ENCODE measurements at regions of chr14 and their contacts with region 1.

Region 1: GRCh38 chr14:68788996-68789820 is 3.7 kb downstream of the ZFP36L1 start:
- DNase-seq: peak; percentile 89
- ATAC-seq: peak; percentile 19
- H3K4me3 ChIP-seq: peak overlapping the region; percentile 90
- H3K27ac ChIP-seq: peak overlapping the region; percentile 97
- H3K4me1 ChIP-seq: peaks cover 56% of the 10 kb centered on the region
- H3K27me3 ChIP-seq: no peaks in the 10 kb centered on the region
- CTCF ChIP-seq: peak; percentile 86

Region 2: GRCh38 chr14:68084256-68084655 is 705.0 kb before region 1 on chr14:
- CTCF ChIA-PET with region 1: no interaction called
- POLR2A ChIA-PET with region 1: no interaction called
- intact Hi-C with region 1: loop called (anchors 1 kb)
- DNase-seq: peak; percentile 37
- ATAC-seq: peak; percentile 48
- H3K4me3 ChIP-seq: no peak overlapping the region
- H3K27ac ChIP-seq: no peak overlapping the region
- H3K4me1 ChIP-seq: no peaks in the 10 kb centered on the region
- H3K27me3 ChIP-seq: no peaks in the 10 kb centered on the region
- CTCF ChIP-seq: peak; percentile 71

Region 3: GRCh38 chr14:68307014-68307789 is 482.0 kb before region 1 on chr14:
- CTCF ChIA-PET with region 1: no interaction called
- POLR2A ChIA-PET with region 1: no interaction called
- intact Hi-C with region 1: loop called (anchors 2 kb)
- DNase-seq: peak; percentile 84
- ATAC-seq: peak; percentile 83
- H3K4me3 ChIP-seq: peak overlapping the region; percentile 4; the same call in 1 of the 2 replicates
- H3K27ac ChIP-seq: peak overlapping the region; percentile 75
- H3K4me1 ChIP-seq: peaks cover 41% of the 10 kb centered on the region
- H3K27me3 ChIP-seq: no peaks in the 10 kb centered on the region
- CTCF ChIP-seq: no peak

Region 4: GRCh38 chr14:68408680-68409079 is 380.5 kb before region 1 on chr14:
- CTCF ChIA-PET with region 1: interaction called, 3 read pairs
- POLR2A ChIA-PET with region 1: interaction called, 10 read pairs
- intact Hi-C with region 1: loop called (anchors 1 kb)
- DNase-seq: peak; percentile 63
- ATAC-seq: peak; percentile 59
- H3K4me3 ChIP-seq: no peak overlapping the region
- H3K27ac ChIP-seq: peak overlapping the region; percentile 22; the same call in 1 of the 2 replicates
- H3K4me1 ChIP-seq: peaks cover 56% of the 10 kb centered on the region
- H3K27me3 ChIP-seq: no peaks in the 10 kb centered on the region
- CTCF ChIP-seq: peak; percentile 63

Region 5: GRCh38 chr14:68598621-68599447 is 190.4 kb before region 1 on chr14:
- CTCF ChIA-PET with region 1: interaction called, 3 read pairs
- POLR2A ChIA-PET with region 1: interaction called, 7 read pairs
- intact Hi-C with region 1: loop called (anchors 2 kb)
- DNase-seq: peak; percentile 97
- ATAC-seq: peak; percentile 92
- H3K4me3 ChIP-seq: peak overlapping the region; percentile 60
- H3K27ac ChIP-seq: peak overlapping the region; percentile 99
- H3K4me1 ChIP-seq: peaks cover 27% of the 10 kb centered on the region
- H3K27me3 ChIP-seq: no peaks in the 10 kb centered on the region
- CTCF ChIP-seq: no peak

Region 6: GRCh38 chr14:68896132-68896531 is 106.9 kb after region 1 on chr14:
- CTCF ChIA-PET with region 1: no interaction called
- POLR2A ChIA-PET with region 1: no interaction called
- intact Hi-C with region 1: no loop called
- DNase-seq: no peak
- ATAC-seq: no peak
- H3K4me3 ChIP-seq: no peak overlapping the region
- H3K27ac ChIP-seq: no peak overlapping the region
- H3K4me1 ChIP-seq: no peaks in the 10 kb centered on the region
- H3K27me3 ChIP-seq: no peaks in the 10 kb centered on the region
- CTCF ChIP-seq: peak; percentile 60